ENCODE measurements at regions of chr15 and their contacts with region 1.

Region 1: DNA sequence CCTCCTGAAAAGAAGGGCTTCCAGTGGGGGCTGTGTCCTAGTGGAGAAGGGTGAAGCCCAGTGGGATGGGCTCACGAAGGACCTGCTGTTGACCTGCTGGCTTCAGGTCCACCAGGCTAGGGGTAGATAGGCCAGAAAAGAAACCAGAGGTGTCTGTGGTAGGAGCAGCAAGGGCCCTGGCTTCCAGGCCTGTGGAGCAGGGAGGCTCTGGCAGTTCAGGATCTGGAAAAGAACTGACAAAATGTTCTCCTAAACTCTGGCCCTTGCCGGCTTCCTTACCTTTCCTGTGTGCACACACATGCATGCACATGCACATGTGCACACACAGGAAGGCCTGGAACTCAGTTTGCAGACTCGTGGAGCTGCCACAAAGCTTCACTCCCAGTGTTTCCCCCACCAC is 49.7 kb downstream of the ABHD2 start:
- DNase-seq: no peak
- H3K4me3 ChIP-seq: no peak overlapping the region
- H3K27ac ChIP-seq: peak overlapping the region; percentile 43; the same call in 1 of the 2 replicates
- H3K4me1 ChIP-seq: peaks cover 26% of the 10 kb centered on the region
- H3K27me3 ChIP-seq: no peaks in the 10 kb centered on the region
- CTCF ChIP-seq: no peak

Region 2: GRCh38 chr15:88897456-88898194 is 240.3 kb before region 1 on chr15:
- CTCF ChIA-PET with region 1: no interaction called
- POLR2A ChIA-PET with region 1: no interaction called
- intact Hi-C with region 1: no loop called
- DNase-seq: peak; percentile 62 to 84
- H3K4me3 ChIP-seq: no peak overlapping the region
- H3K27ac ChIP-seq: no peak overlapping the region
- H3K4me1 ChIP-seq: 0 out of 2 replicates have a peak, but pooled peaks cover 3% of the 10 kb centered on the region
- H3K27me3 ChIP-seq: peaks cover 19% of the 10 kb centered on the region; the same call in 1 of the 2 replicates
- CTCF ChIP-seq: peak; percentile 57

Region 3: GRCh38 chr15:89123181-89123525 is 14.8 kb before region 1 on chr15:
- CTCF ChIA-PET with region 1: no interaction called
- POLR2A ChIA-PET with region 1: interaction called, 22 read pairs
- intact Hi-C with region 1: loop called (anchors 2 kb)
- DNase-seq: no peak
- H3K4me3 ChIP-seq: no peak overlapping the region
- H3K27ac ChIP-seq: no peak overlapping the region
- H3K4me1 ChIP-seq: peaks cover 75% of the 10 kb centered on the region
- H3K27me3 ChIP-seq: no peaks in the 10 kb centered on the region
- CTCF ChIP-seq: no peak